ENCODE measurements at regions of chr1 and their contacts with region 1.

Region 1: DNA sequence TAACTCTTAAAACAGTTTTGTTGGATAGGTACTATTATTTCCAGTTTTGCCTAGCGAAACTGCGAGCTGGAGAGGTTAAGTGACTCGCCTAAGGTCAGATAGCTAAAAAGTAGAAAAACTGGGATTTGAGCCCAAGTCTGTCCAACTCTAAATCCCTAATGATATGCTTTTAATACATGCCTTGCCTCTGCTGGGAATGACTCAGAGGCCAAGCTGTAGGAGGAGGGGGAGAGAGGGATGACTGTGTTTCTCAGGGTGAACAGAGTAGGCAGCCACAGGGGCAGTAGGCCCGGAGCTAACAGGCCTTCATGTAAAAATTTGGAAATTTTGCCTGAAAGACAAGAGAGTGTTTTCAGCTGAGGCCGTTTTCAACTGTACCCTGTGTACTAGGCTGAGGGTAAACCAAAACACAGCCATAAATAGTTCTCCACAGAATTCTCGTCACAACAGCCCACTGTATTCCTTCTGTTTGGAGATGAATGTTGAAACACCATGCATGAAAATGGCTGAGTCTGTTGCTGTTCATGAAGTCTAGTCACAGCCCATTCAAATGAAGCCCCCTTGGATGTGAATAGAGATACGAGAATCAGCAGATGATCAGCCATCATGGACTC is 107.5 kb upstream of the HOOK1 start:
- DNase-seq: peak; percentile 24
- H3K4me3 ChIP-seq: no peak overlapping the region
- H3K27ac ChIP-seq: peak overlapping the region; percentile 55 to 66 (median 60)
- H3K4me1 ChIP-seq: peaks cover 4 to 43% (median 19%) of the 10 kb centered on the region in 4 donors
- H3K27me3 ChIP-seq: no peaks in the 10 kb centered on the region
- CTCF ChIP-seq: no peak
- EP300 ChIP-seq: no peak
- POLR2A ChIP-seq: no peak

Region 2: DNA sequence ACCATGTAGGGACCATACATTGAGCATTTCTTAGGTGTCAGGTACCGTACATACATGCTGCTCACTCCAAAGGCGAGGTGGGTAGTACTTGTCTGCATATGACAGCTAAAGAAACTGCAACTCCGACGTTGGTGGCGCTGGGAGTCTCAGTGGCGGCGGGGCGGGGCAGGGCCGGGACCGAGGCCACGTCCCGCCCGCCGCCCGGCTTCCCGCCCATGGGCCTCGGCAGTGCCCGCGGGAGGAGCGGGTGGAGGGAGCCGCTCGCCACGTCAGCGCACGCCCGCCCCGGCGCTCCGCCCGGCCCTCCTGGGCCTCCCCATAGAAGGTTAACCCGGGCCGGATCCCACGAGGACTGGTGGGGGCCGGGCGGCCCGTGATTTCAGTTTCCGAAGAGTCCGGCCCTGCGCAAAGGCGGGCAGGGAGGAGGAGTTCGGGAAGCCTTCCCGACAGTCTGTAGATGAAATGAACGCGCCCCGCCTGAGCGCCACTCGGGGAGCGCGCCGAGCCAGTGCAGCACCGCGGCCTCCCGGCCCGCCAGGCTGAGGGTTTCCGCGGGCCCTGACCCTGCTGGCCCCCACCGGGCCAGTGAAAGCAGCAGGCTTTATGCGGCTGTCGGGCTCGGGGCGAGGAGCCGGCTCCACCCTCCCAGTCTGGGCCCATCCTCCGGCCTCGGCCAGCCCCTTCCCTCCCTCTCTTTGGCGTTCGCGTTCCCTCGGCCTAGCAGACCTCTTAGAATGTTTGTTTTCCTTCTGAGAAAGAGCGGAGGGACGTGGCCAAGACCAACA is 803.6 kb before region 1 on chr1:
- in situ Hi-C with region 1: no loop called
- intact Hi-C with region 1: loop called (anchors 10 kb)
- DNase-seq: peak; percentile 94
- H3K4me3 ChIP-seq: peak overlapping the region; percentile 23 to 58 (median 39)
- H3K27ac ChIP-seq: peak overlapping the region; percentile 95 to 96 (median 96)
- H3K4me1 ChIP-seq: peaks cover 16 to 51% (median 32%) of the 10 kb centered on the region in 4 donors
- H3K27me3 ChIP-seq: no peaks in the 10 kb centered on the region
- CTCF ChIP-seq: no peak
- EP300 ChIP-seq: peak; percentile 38
- POLR2A ChIP-seq: peak; percentile 96

Region 3: GRCh38 chr1:58941471-58942289 is 765.6 kb before region 1 on chr1:
- in situ Hi-C with region 1: no loop called
- intact Hi-C with region 1: no loop called
- DNase-seq: no peak
- H3K4me3 ChIP-seq: no peak overlapping the region
- H3K27ac ChIP-seq: peak overlapping the region in 1 of 4 donors; percentile 48
- H3K4me1 ChIP-seq: peaks cover 9 to 15% (median 10%) of the 10 kb centered on the region in 4 donors
- H3K27me3 ChIP-seq: no peaks in the 10 kb centered on the region
- CTCF ChIP-seq: no peak
- EP300 ChIP-seq: no peak
- POLR2A ChIP-seq: no peak

Region 4: DNA sequence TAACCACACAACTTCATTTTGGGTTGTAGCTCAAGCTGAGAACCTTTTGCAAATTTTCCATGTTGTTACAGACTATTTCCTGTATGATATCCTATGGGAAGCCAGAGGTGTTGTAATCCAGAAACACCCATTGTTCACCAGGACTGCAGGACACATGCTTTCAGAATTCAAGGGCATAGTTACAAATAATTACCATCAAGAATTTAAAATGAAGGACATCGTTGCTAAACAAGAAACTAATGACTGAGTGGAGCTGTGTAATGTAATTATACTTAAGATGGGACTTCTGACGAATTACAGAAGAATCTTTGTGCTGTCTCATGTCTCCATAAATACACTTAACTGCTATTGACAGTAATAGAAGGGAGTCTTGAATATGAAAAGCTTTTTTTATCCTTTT is 59.8 kb after region 1 on chr1:
- in situ Hi-C with region 1: no loop called
- intact Hi-C with region 1: no loop called
- DNase-seq: no peak
- H3K4me3 ChIP-seq: no peak overlapping the region
- H3K27ac ChIP-seq: no peak overlapping the region
- H3K4me1 ChIP-seq: no peaks in the 10 kb centered on the region
- H3K27me3 ChIP-seq: no peaks in the 10 kb centered on the region
- CTCF ChIP-seq: no peak
- EP300 ChIP-seq: no peak
- POLR2A ChIP-seq: no peak

Region 5: DNA sequence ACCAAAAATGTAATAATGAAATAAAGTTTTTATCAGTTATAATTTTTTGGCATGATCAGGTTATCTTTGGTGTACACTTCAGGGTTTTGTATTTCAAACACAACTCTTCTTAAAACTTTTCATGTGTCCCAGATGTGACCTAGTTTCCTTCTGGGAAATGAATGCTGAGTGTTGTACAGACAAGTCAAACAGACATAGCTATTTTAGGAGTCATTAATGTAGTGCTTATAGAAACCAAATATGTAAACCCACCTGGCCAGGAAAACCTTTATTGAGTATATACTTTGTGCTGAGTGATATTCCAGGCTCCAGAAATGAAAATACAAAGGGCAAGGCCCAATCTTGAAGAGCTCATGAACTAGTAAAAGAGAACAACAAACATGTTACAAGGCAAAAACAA is 81.5 kb after region 1 on chr1:
- in situ Hi-C with region 1: no loop called
- intact Hi-C with region 1: no loop called
- DNase-seq: no peak
- H3K4me3 ChIP-seq: no peak overlapping the region
- H3K27ac ChIP-seq: no peak overlapping the region
- H3K4me1 ChIP-seq: no peaks in the 10 kb centered on the region
- H3K27me3 ChIP-seq: no peaks in the 10 kb centered on the region
- CTCF ChIP-seq: no peak
- EP300 ChIP-seq: no peak
- POLR2A ChIP-seq: no peak